A673 (cell line): ENCODE measurements at regions of chr3 and their contacts with region 1.

Region 1: DNA sequence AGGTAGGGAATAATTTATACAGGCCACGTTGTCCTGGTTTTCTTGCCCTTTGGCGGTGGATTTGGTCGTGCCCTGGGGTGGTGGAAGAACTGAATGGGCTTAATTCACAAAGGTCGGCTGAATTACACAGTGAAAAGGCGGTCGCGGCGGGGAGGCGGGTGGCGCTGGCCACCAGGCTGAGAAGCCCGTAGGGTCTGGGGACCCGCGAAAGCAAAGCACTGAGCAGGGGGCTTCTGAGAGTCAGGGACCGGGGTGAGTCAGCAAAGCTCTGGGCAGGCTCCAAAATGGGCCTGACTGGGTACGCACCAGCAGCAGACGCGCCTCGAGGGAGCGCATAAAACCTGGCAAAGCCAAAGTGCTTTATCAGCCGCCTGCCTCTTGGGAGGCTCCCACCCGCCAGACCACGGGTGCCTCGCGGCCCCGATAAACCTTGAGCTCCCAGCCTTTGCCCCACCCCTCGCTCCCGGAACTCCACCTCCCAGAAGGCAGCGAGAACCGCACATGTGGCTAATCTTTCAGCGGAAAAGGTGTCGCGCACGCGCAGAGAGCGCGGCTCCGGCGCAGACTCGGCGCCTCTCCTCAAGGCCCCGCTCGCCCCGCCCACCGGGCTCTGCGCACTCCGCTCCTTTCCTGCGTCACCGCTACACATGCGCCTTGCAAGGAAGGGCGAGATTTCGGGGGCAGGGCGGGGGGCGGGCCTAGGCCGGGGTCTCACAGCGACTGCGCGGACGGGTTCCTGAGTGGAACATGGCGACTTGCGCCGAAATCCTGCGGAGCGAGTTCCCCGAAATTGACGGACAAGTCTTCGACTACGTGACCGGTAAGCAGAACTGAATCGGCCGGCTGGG is at the start of gene ABCF3:
- DNase-seq: peak; percentile 100
- H3K4me3 ChIP-seq: peak within 1 kb of the TSS; percentile 99
- H3K27ac ChIP-seq: peak within 1 kb of the TSS; percentile 92
- H3K4me1 ChIP-seq: peaks cover 9% of the 10 kb centered on the region
- H3K27me3 ChIP-seq: no peaks in the 10 kb centered on the region
- CTCF ChIP-seq: no peak
- total RNA-seq, gene ABCF3: 65.1 and 65.2 TPM in 2 replicates

Region 2: DNA sequence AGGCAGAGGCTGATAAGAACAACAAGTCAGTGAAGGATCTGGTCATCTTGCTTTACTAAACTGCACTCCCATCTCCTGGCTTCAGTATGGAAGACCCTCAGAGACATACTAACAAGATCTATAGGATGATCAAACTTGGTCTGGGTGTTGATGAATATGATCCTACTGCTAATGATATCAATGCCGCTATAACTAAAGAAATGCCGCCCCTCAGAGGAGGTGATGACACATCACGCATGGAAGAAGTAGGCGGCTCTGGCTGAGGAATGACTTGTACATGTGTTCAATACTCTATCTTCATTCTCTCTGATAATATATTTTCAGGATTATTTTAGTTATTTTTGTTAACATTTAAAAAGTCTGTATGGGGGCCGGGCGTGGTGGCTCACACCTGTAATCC is 68.0 kb before region 1 on chr3:
- CTCF ChIA-PET with region 1: interaction called, 13 read pairs
- POLR2A ChIA-PET with region 1: no interaction called
- intact Hi-C with region 1: no loop called
- DNase-seq: peak; percentile 65
- H3K4me3 ChIP-seq: no peak overlapping the region
- H3K27ac ChIP-seq: no peak overlapping the region
- H3K4me1 ChIP-seq: no peaks in the 10 kb centered on the region
- H3K27me3 ChIP-seq: peaks cover 6% of the 10 kb centered on the region
- CTCF ChIP-seq: peak; percentile 53

Region 3: GRCh38 chr3:184135149-184135910 is 50.4 kb before region 1 on chr3 and contains the start of gene EIF2B5:
- CTCF ChIA-PET with region 1: interaction called, 3 read pairs
- POLR2A ChIA-PET with region 1: no interaction called
- intact Hi-C with region 1: loop called (anchors 2 kb)
- DNase-seq: peak; percentile 98
- H3K4me3 ChIP-seq: peak within 1 kb of the TSS; percentile 89
- H3K27ac ChIP-seq: peak within 1 kb of the TSS; percentile 84
- H3K4me1 ChIP-seq: peaks cover 9% of the 10 kb centered on the region
- H3K27me3 ChIP-seq: no peaks in the 10 kb centered on the region
- CTCF ChIP-seq: peak; percentile 53
- total RNA-seq, gene EIF2B5: 57.8 and 64.2 TPM in 2 replicates

Region 4: DNA sequence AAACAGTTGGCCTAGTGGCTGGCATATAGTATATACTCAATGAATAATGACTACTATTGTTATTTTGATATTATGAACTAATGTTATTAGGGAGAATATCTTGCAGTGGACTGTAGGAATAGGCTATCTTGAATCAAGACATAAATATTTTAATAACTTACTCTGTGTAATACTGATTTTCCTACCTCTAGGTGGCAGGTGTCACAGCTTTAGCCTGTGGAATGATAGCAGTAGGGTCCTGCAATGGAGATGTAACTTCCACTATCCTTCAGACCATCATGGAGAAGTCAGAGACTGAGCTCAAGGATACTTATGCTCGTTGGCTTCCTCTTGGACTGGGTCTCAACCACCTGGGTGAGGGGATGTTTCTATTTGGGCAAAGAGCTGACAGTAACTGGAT is 119.9 kb after region 1 on chr3:
- CTCF ChIA-PET with region 1: no interaction called
- POLR2A ChIA-PET with region 1: no interaction called
- intact Hi-C with region 1: no loop called
- DNase-seq: peak; percentile 39
- H3K4me3 ChIP-seq: no peak overlapping the region
- H3K27ac ChIP-seq: no peak overlapping the region
- H3K4me1 ChIP-seq: peaks cover 3% of the 10 kb centered on the region
- H3K27me3 ChIP-seq: no peaks in the 10 kb centered on the region
- CTCF ChIP-seq: peak; percentile 49